CD8-positive, alpha-beta T cell (primary cell): ENCODE measurements at regions of chr11 and their contacts with region 1.

Region 1: DNA sequence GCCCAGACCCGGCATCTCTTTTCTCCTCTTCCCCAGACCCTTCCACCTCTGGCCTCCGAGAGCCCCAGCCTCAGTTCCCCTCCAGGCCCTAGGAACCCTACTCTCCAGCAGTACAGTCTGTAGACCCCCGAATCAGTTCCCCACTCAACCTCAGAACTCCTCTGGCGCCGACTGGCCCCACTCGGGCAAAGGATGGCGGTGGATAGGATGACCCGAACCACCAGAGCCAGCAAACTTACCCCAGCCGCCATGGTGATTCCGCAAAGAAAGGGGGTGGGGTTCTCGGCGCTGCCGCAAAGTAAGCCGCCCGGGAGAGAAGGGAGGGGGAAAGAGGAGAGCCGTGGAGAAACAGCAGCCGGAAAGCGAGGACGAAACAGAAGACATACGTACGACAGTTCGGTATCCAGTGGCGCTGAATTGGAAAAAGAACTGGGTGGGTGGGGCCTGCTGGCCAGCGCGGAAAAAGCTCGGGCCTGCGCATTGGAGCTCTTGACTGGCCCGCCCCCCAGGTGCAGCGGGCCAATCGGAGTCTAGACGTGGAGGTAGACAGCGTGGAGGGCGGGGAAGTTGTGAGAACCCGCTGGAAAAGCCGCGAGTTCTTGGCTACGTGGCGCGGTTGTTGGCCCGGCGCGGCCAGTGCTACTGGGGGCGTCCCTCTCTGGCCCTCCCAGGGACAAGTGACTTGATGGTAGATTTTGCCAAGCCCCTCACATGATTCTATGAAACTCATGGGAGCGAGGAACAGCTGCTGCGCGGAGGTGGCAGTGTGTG is at the start of gene EEF1G:
- DNase-seq: peak; percentile 95 to 100 (median 97)
- ATAC-seq: peak; percentile 94
- H3K4me3 ChIP-seq: peak within 1 kb of the TSS; percentile 97 to 99
- H3K4me3 Mint-ChIP-seq: peak within 1 kb of the TSS; percentile 97
- H3K27ac ChIP-seq: peak within 1 kb of the TSS; percentile 85
- H3K27ac Mint-ChIP-seq: peak within 1 kb of the TSS; percentile 90
- H3K4me1 ChIP-seq: peaks cover 28% of the 10 kb centered on the region
- H3K4me1 Mint-ChIP-seq: peaks cover 55% of the 10 kb centered on the region
- H3K27me3 ChIP-seq: no peaks in the 10 kb centered on the region
- H3K27me3 Mint-ChIP-seq: no peaks in the 10 kb centered on the region
- CTCF ChIP-seq: no peak
- total RNA-seq, gene EEF1G: 2,174 to 2,204 TPM

Region 2: DNA sequence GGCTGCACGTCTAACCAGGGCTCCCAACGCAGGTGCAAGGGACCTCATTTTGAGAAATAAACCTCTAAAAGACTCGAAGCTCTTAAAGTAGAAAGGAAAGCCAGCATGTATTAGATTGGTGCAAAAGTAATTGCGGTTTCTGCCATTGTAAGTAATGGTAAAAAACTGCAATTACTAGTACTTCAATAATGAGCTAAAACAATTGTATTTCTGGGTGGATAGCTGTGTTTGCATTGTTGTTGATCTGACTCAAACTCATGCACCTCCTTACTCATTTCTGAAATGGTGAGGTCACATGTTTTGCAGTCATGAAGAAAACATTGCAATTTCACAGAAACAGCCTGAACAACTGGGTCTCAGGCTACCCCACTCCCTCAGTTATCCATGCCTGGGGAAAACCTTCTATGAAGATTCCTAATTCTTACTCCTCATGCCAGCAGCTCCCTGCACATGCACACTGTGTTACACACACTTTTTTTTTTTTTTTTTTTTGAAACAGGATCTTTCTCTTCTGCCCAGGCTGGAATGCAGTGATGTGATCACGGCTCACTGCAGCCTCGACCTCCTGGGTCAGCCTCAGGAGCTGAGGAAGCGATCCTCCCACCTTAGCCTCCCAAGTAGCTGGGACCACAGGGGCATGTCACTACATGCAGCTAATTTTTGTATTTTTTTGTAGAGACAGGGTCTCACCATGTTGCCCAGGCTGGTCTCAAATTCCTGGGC is 1303.3 kb before region 1 on chr11:
- CTCF ChIA-PET with region 1: no interaction called
- POLR2A ChIA-PET with region 1: no interaction called
- intact Hi-C with region 1: no loop called
- DNase-seq: no peak
- ATAC-seq: no peak
- H3K4me3 ChIP-seq: no peak overlapping the region
- H3K4me3 Mint-ChIP-seq: no peak overlapping the region
- H3K27ac ChIP-seq: no peak overlapping the region
- H3K27ac Mint-ChIP-seq: no peak overlapping the region
- H3K4me1 ChIP-seq: no peaks in the 10 kb centered on the region
- H3K4me1 Mint-ChIP-seq: no peaks in the 10 kb centered on the region
- H3K27me3 ChIP-seq: no peaks in the 10 kb centered on the region
- H3K27me3 Mint-ChIP-seq: no peaks in the 10 kb centered on the region
- CTCF ChIP-seq: no peak

Region 3: DNA sequence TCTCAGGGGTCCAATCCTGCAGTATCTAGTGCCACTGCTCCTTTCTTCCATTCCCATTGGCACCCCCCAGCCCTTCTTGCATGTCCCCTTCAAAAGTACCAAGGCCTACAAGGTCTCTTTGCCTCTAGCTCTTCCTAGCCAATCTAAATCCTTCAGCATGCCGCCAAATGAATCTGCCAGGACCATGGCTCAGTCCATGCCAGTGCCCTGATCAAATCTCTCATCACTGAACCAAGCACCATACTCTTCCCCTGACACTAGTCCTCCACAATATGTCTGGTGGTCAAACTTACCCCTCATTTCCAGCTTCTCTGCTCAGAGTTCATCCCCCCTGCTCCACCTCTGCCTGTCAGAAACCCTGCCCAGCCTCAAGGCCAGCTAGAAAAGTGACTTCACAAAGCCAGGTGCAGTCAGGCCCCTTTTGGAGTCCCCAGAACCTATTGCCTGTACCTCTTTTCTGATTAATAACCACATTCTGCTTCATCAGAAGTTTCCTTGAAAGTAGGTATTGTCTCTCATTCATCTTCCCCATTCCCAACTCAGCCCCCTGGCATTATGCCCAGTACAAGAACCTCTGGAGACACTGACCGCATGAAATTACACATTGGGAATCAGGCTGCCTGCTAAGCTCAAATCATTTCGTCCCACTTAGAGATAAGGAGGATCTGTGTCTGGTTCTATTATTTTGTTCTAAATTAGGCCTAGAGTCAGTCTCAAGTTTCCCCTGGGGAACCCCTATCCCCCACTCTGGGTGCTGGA is 769.7 kb before region 1 on chr11:
- CTCF ChIA-PET with region 1: no interaction called
- POLR2A ChIA-PET with region 1: no interaction called
- intact Hi-C with region 1: no loop called
- DNase-seq: no peak
- ATAC-seq: no peak
- H3K4me3 ChIP-seq: no peak overlapping the region
- H3K4me3 Mint-ChIP-seq: no peak overlapping the region
- H3K27ac ChIP-seq: no peak overlapping the region
- H3K27ac Mint-ChIP-seq: no peak overlapping the region
- H3K4me1 ChIP-seq: no peaks in the 10 kb centered on the region
- H3K4me1 Mint-ChIP-seq: no peaks in the 10 kb centered on the region
- H3K27me3 ChIP-seq: no peaks in the 10 kb centered on the region
- H3K27me3 Mint-ChIP-seq: no peaks in the 10 kb centered on the region
- CTCF ChIP-seq: no peak

Region 4: DNA sequence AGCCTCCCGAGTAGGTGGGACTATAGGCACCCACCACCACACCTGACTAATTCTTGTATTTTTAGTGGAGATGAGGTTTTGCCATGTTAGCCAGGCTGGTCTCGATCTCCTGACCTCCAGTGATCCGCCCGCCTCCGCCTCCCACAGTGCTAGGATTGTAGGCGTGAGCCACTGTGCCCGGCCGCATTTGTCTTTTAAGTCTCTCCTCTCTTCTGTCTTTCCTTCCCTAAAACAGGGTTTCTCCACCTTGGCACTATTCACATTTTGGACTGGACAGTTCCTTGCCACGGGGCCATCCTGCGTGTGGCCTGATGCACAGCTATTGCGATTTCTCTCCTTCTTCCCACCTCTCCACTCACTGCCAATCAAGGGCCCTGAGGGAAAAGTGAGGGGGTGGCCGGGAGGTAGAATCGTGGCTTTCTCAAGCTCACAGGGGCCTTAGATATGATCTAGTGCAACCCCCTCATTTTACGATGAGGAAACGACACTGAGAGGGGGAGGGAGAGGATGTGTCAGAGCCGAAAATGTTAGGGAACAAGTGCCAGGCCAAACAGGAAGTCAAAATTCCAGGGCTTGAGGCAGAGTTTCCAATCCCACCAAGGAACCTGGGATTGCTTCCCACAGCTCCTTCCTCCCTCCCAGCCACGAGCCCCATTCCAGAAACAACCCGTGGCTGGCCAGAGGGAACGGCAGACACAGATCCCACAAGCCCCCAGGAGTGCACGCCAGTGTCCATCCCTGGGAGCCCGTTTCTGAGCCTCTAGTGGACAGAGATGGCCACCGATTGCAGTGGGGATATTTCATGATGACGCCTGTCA is 133.8 kb before region 1 on chr11:
- CTCF ChIA-PET with region 1: no interaction called
- POLR2A ChIA-PET with region 1: no interaction called
- intact Hi-C with region 1: no loop called
- DNase-seq: no peak
- ATAC-seq: no peak
- H3K4me3 ChIP-seq: no peak overlapping the region
- H3K4me3 Mint-ChIP-seq: no peak overlapping the region
- H3K27ac ChIP-seq: no peak overlapping the region
- H3K27ac Mint-ChIP-seq: no peak overlapping the region
- H3K4me1 ChIP-seq: peaks cover 7% of the 10 kb centered on the region
- H3K4me1 Mint-ChIP-seq: peaks cover 15% of the 10 kb centered on the region
- H3K27me3 ChIP-seq: peaks cover 0 to 3% of the 10 kb centered on the region in 2 experiments
- H3K27me3 Mint-ChIP-seq: peaks cover 7% of the 10 kb centered on the region
- CTCF ChIP-seq: no peak

Region 5: GRCh38 chr11:62601394-62602140 is 27.8 kb after region 1 on chr11 and contains the start of gene MTA2:
- CTCF ChIA-PET with region 1: no interaction called
- POLR2A ChIA-PET with region 1: interaction called, 13 read pairs
- intact Hi-C with region 1: loop called in 1 of 2 experiments (anchors 1 kb)
- DNase-seq: peak; percentile 98 to 100 (median 99)
- ATAC-seq: peak; percentile 77
- H3K4me3 ChIP-seq: peak within 1 kb of the TSS; percentile 62 to 98
- H3K4me3 Mint-ChIP-seq: peak within 1 kb of the TSS; percentile 89
- H3K27ac ChIP-seq: peak within 1 kb of the TSS; percentile 83 to 86
- H3K27ac Mint-ChIP-seq: peak within 1 kb of the TSS; percentile 92
- H3K4me1 ChIP-seq: peaks cover 22% of the 10 kb centered on the region
- H3K4me1 Mint-ChIP-seq: peaks cover 57% of the 10 kb centered on the region
- H3K27me3 ChIP-seq: no peaks in the 10 kb centered on the region
- H3K27me3 Mint-ChIP-seq: no peaks in the 10 kb centered on the region
- CTCF ChIP-seq: no peak
- total RNA-seq, gene MTA2: 148 to 154 TPM

Region 6: GRCh38 chr11:62621567-62622470 is 48.0 kb after region 1 on chr11 and contains the start of gene B3GAT3:
- CTCF ChIA-PET with region 1: no interaction called
- POLR2A ChIA-PET with region 1: interaction called, 4 read pairs
- intact Hi-C with region 1: loop called in 1 of 2 experiments (anchors 5 kb)
- DNase-seq: peak; percentile 90 to 99 (median 97)
- ATAC-seq: peak; percentile 81
- H3K4me3 ChIP-seq: peak within 1 kb of the TSS; percentile 69 to 80
- H3K4me3 Mint-ChIP-seq: peak within 1 kb of the TSS; percentile 98
- H3K27ac ChIP-seq: peak within 1 kb of the TSS; percentile 78 to 88
- H3K27ac Mint-ChIP-seq: peak within 1 kb of the TSS; percentile 97
- H3K4me1 ChIP-seq: peaks cover 20% of the 10 kb centered on the region
- H3K4me1 Mint-ChIP-seq: peaks cover 30% of the 10 kb centered on the region
- H3K27me3 ChIP-seq: no peaks in the 10 kb centered on the region
- H3K27me3 Mint-ChIP-seq: no peaks in the 10 kb centered on the region
- CTCF ChIP-seq: no peak
- total RNA-seq, gene B3GAT3: 41.7 to 44.0 TPM

Region 7: DNA sequence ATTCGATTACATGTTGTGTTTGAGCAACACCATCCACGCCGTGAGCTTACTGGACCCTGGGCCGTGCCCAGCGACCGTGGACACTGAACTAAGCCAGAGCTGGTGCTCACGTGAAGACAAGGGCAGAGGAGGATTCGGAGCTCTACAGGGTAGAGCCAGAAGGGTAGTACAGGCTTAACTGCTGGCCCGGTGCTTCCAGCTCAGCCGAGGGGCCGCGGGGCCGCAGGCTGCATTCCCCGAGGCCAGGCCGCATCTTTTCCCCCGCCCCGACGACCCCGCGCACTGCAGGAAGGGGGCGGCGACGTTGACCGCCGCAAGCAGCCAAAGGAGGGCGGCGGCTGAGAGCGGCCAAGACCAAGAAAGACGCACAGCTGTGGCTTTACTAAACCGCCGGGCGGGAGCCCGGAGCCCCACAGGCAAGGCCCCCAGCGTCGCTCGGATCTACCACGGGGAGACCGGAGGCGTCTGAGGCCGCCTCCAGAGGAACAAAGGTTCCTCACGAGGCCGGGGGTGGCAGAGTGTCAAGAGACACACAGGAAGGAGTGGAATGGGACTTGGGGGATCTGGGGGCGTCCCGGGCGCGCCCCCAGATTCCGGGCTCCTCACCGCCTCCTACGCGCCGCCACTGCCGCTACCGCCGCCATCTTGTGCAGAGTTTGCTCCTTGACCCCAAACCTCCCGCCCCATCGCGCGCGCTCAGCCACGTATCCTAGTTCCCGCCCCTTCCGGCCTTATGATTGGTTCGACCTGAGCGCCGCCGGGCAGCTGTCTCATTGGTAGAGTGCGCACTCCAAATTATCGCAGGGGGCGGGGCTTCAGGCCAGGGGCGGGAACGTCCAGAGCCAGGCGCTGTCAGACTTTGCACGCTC is 72.4 kb after region 1 on chr11 and contains the start of gene GANAB:
- CTCF ChIA-PET with region 1: no interaction called
- POLR2A ChIA-PET with region 1: no interaction called
- intact Hi-C with region 1: loop called in 1 of 2 experiments (anchors 2 kb)
- DNase-seq: peak; percentile 96 to 99 (median 99)
- ATAC-seq: peak; percentile 98
- H3K4me3 ChIP-seq: peak within 1 kb of the TSS; percentile 81 to 98
- H3K4me3 Mint-ChIP-seq: peak within 1 kb of the TSS; percentile 98
- H3K27ac ChIP-seq: peak within 1 kb of the TSS; percentile 90 to 98
- H3K27ac Mint-ChIP-seq: peak within 1 kb of the TSS; percentile 98
- H3K4me1 ChIP-seq: peaks cover 27% of the 10 kb centered on the region
- H3K4me1 Mint-ChIP-seq: peaks cover 37% of the 10 kb centered on the region
- H3K27me3 ChIP-seq: no peaks in the 10 kb centered on the region
- H3K27me3 Mint-ChIP-seq: no peaks in the 10 kb centered on the region
- CTCF ChIP-seq: no peak
- total RNA-seq, gene GANAB: 177 to 184 TPM

Region 8: GRCh38 chr11:62753736-62754603 is 180.2 kb after region 1 on chr11 and contains the start of gene ZBTB3:
- CTCF ChIA-PET with region 1: no interaction called
- POLR2A ChIA-PET with region 1: interaction called, 9 read pairs
- intact Hi-C with region 1: loop called in 1 of 2 experiments (anchors 5 kb)
- DNase-seq: peak; percentile 93 to 100 (median 96)
- ATAC-seq: peak; percentile 93
- H3K4me3 ChIP-seq: peak within 1 kb of the TSS; percentile 72 to 88
- H3K4me3 Mint-ChIP-seq: peak within 1 kb of the TSS; percentile 99
- H3K27ac ChIP-seq: peak within 1 kb of the TSS; percentile 64 to 91
- H3K27ac Mint-ChIP-seq: peak within 1 kb of the TSS; percentile 98
- H3K4me1 ChIP-seq: peaks cover 28% of the 10 kb centered on the region
- H3K4me1 Mint-ChIP-seq: peaks cover 32% of the 10 kb centered on the region
- H3K27me3 ChIP-seq: no peaks in the 10 kb centered on the region
- H3K27me3 Mint-ChIP-seq: no peaks in the 10 kb centered on the region
- CTCF ChIP-seq: no peak
- total RNA-seq, gene ZBTB3: 3.7 to 4.8 TPM